ENCODE measurements at regions of chr3 and their contacts with region 1.

Region 1: DNA sequence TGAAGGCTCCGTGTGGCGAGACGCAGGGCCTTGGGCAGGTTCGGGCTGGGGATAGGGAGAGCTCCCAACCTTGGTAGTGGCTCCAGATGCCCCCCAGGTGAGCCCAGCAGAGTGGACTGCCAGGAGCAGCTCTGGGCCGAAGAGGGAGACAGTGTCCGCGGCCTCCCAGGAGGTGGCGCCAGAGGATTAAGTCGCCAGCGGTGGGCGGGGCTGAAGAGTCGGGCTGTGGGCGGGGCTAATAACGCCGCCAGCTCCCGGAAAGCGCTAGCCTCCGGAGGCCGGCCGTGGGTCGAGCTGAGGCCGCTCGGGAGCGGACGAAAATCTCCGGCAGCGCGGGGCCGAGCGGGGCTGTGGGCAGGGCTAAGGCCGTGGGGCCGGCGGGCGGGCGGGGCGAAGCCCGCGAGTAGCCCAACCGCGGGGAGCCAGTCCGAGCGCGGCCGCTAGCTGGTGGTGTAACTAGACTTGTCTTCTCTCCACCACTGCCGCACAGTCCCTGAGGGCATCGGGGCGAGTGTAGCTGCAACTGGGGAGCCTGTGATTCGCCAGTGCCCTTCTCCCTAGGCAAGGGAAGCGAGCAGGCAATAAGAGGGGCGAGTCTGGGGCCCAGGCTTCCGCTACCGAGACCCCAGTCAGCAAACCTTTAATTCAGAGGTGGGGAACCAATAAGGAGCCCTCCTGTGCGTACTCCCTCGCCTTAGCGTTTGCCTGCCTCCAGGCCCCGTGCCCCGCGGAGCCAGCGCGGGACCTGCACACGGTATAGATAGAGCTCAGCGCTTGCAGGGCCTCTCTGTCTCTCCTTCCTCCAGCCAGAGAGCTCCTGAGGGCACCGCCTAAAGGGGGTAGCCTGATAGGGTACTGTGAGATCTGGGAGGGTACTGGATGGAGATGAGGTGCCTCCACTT is 14.4 kb upstream of the BSN start:
- DNase-seq: peak; percentile 96
- ATAC-seq: peak; percentile 98
- H3K4me3 ChIP-seq: peak overlapping the region; percentile 69
- H3K27ac ChIP-seq: no peak overlapping the region
- H3K4me1 ChIP-seq: no peaks in the 10 kb centered on the region; the same call in 1 of the 2 replicates
- H3K27me3 ChIP-seq: peaks cover 13% of the 10 kb centered on the region; the same call in 1 of the 2 replicates
- CTCF ChIP-seq: peak; percentile 93

Region 2: DNA sequence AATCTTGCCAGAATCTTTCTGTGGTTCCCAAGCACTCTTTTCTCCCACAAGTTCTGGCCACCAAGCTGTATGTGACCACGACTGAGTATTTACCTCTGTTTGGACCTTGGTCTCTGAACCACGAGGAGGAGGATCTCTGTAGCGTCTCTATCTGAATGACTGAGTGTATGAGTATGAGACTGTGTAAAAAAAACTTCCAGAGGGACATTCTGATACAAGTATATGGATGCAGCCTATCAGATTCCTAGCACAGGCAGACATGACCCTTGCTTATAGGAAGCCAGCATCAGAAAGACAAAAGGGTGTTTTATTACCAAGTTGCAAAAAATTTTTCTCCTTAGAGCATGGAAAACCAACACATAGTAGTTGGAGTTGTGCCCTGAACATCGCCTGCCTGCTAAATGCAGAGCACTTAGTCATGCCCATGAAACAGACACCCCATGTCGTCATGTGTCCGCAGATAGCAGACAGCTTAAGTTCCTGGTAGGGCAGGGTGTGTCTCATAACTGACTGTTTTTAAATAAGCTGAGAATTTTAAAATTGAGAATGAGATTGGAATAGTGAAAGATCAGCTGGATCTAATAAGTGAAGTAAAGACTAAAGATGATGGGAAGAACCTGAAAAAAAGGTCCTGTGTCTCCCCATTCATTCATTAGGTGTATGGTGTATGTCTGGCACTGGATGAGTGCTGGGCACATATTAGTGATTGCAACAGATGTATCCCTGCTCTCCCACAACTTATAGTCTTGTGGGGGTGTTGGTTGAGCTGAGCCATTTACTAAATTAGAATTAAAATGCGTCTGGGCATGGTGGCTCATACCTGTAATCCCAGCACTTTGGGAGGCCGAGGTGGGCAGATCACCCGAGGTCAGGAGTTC is 38.9 kb before region 1 on chr3:
- CTCF ChIA-PET with region 1: interaction called, 10 read pairs
- POLR2A ChIA-PET with region 1: no interaction called
- intact Hi-C with region 1: no loop called
- DNase-seq: peak; percentile 95
- ATAC-seq: peak; percentile 98
- H3K4me3 ChIP-seq: peak overlapping the region; percentile 14
- H3K27ac ChIP-seq: peak overlapping the region; percentile 93
- H3K4me1 ChIP-seq: peaks cover 20% of the 10 kb centered on the region
- H3K27me3 ChIP-seq: no peaks in the 10 kb centered on the region
- CTCF ChIP-seq: no peak

Region 3: DNA sequence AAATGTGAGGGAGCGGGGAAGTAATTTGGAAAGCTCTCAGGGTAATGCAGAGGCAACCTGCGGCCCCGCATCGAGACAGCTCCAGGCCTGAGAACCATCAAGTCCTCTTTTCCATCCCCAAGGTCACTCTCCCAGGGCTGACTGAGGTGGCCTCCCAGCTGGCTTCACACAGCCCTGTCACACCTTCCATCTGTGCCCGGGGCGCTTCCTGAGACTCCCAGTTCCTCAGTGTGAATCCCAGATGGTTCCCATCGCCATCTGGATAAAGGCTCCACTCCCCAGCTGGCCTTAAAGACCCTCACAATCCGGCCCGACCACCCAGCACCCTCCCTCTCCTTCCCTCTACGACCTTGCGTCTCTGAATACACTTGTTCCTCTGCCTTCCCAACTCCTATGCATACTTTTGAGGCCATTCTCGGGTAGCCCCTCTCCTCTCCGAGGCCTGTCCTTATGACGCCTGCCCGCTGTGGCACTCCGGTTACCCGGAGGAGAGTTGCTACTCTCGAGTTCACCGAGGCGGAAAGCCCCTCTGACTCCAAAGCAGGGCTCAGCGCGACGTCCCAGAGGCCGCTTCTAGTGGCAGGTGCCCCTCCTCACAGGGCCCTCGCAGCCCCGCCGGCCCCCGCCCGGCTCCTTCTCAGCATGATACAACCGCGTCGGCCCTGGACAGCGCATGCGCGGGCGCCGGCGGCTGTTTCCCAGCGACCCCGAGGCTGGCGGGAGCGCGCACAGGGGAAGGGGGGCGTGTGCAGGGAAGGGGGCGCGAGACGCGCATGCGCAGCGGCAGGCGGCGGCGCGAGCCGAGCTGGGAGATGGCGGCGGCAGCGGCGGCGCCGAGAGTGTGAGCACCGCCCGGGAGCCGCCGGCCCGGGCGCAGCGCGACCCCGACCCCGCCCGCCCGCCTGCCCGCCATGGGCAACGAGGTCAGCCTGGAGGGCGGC is 14.1 kb after region 1 on chr3 and contains the start of gene BSN:
- CTCF ChIA-PET with region 1: interaction called, 6 read pairs
- POLR2A ChIA-PET with region 1: no interaction called
- intact Hi-C with region 1: loop called (anchors 1 kb)
- DNase-seq: peak; percentile 91
- ATAC-seq: peak; percentile 82
- H3K4me3 ChIP-seq: peak within 1 kb of the TSS; percentile 80
- H3K27ac ChIP-seq: no peak within 1 kb of the TSS
- H3K4me1 ChIP-seq: peaks cover 15% of the 10 kb centered on the region
- H3K27me3 ChIP-seq: peaks cover 14% of the 10 kb centered on the region; the same call in 1 of the 2 replicates
- CTCF ChIP-seq: no peak
- total RNA-seq, gene BSN: 0.80 and 0.92 TPM in 2 replicates

Region 4: DNA sequence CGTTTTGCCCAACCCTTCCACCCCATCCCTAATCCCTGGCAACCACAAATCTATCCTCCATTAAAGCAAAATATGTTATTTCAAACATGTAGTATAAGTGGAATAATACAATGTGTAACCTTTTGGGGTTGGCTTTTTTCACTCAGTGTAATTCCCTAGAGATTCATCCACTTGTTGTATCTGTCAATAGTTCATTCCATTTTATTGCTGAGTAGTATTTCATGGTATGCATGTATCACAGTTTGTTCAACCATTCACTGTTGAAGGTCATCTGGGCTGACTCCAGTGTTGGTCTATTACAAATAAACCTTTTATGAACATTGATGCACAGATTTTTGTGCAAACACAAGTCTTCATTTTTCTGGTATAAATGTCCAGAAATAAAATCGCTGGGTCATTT is 53.1 kb after region 1 on chr3:
- CTCF ChIA-PET with region 1: no interaction called
- POLR2A ChIA-PET with region 1: no interaction called
- intact Hi-C with region 1: loop called (anchors 1 kb)
- DNase-seq: peak; percentile 80
- ATAC-seq: peak; percentile 97
- H3K4me3 ChIP-seq: no peak overlapping the region
- H3K27ac ChIP-seq: peak overlapping the region; percentile 27
- H3K4me1 ChIP-seq: peaks cover 10% of the 10 kb centered on the region; the same call in 1 of the 2 replicates
- H3K27me3 ChIP-seq: no peaks in the 10 kb centered on the region
- CTCF ChIP-seq: no peak

Region 5: GRCh38 chr3:49668414-49668797 is 128.5 kb after region 1 on chr3:
- CTCF ChIA-PET with region 1: interaction called, 52 read pairs
- POLR2A ChIA-PET with region 1: no interaction called
- intact Hi-C with region 1: loop called (anchors 1 kb)
- DNase-seq: peak; percentile 56
- ATAC-seq: peak; percentile 61
- H3K4me3 ChIP-seq: peak overlapping the region; percentile 15; the same call in 1 of the 2 replicates
- H3K27ac ChIP-seq: peak overlapping the region; percentile 90
- H3K4me1 ChIP-seq: peaks cover 30% of the 10 kb centered on the region
- H3K27me3 ChIP-seq: no peaks in the 10 kb centered on the region
- CTCF ChIP-seq: peak; percentile 43; the same call in 1 of the 2 replicates

Region 6: DNA sequence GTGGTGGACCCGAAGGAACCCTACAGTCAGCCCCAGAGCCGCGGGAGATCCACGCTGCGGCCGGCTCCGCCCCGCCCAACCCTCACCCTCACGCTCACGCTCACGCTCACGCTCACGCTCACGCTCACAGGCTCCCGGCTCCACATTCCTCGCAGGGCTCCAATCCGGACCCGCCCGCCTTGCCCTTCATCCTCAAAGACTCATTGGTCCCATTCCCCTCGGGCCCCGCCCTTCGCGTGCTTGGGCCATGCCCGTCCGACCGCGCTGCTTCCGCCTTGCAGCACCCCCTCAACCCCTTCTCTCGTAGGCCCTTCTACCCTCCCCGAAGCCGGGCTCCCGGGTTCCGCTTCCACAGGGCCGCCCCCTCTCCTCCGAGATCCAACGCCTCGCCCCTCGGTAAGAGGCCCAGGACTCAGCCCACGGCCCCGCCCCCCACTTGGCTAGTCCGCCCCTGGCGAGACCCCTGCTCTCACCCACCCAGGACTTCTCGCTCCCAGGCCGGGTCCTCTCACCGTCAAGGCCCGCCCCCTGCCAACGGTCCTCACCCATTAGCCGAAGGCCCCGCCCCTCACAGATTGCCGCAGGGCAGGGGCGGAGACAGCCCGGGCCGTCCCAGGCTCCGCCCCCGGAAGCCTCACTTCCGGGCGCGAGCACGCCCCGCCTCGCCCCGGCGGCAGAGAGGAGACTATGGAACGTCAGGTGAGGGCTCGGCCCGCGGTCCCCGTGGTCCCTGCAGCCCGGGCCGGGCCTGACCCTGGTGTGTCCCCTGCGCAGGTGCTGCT is 134.0 kb after region 1 on chr3 and contains the start of gene APEH:
- CTCF ChIA-PET with region 1: interaction called, 52 read pairs
- POLR2A ChIA-PET with region 1: no interaction called
- intact Hi-C with region 1: loop called (anchors 1 kb)
- DNase-seq: peak; percentile 98
- ATAC-seq: peak; percentile 81
- H3K4me3 ChIP-seq: peak within 1 kb of the TSS; percentile 88
- H3K27ac ChIP-seq: peak within 1 kb of the TSS; percentile 89
- H3K4me1 ChIP-seq: peaks cover 26% of the 10 kb centered on the region
- H3K27me3 ChIP-seq: no peaks in the 10 kb centered on the region
- CTCF ChIP-seq: no peak
- total RNA-seq, gene APEH: 236 and 246 TPM in 2 replicates